Colonic mucosa (tissue), 4 donors: ENCODE measurements at regions of chr4 and their contacts with region 1.

Region 1: GRCh38 chr4:67983333-67983732 is 20.0 kb upstream of the TMPRSS11A start:
- DNase-seq: no peak
- H3K4me3 ChIP-seq: no peak overlapping the region
- H3K27ac ChIP-seq: no peak overlapping the region
- H3K4me1 ChIP-seq: no peaks in the 10 kb centered on the region
- H3K27me3 ChIP-seq: no peaks in the 10 kb centered on the region
- CTCF ChIP-seq: no peak

Region 2: DNA sequence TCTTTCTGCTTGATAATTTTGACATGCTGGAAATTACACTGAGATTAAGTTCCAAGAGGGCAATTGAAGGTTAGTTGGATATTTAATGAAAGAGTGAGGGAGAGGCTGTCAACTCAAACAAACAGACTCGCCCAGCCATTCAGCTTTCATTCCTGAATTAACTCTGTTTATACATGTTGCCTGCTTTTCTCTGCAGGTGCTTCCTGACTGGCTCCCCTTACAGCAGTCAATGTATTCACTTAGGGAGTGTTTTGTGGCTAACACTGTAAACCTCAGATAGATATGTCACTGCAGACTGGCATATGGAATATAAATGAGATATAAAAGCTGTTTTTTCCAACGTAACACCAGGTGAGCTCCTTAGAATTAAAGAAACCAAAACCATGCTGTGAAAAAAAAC is 48.7 kb before region 1 on chr4:
- intact Hi-C with region 1: no loop called
- DNase-seq: no peak
- H3K4me3 ChIP-seq: no peak overlapping the region
- H3K27ac ChIP-seq: no peak overlapping the region
- H3K4me1 ChIP-seq: no peaks in the 10 kb centered on the region
- H3K27me3 ChIP-seq: no peaks in the 10 kb centered on the region
- CTCF ChIP-seq: no peak

Region 3: GRCh38 chr4:68175562-68176155 is 192.3 kb after region 1 on chr4:
- intact Hi-C with region 1: loop called (anchors 10 kb)
- DNase-seq: peak; percentile 34
- H3K4me3 ChIP-seq: no peak overlapping the region
- H3K27ac ChIP-seq: no peak overlapping the region
- H3K4me1 ChIP-seq: no peaks in the 10 kb centered on the region
- H3K27me3 ChIP-seq: no peaks in the 10 kb centered on the region
- CTCF ChIP-seq: peak; percentile 44